ENCODE measurements at regions of chr17 and their contacts with region 1.

Region 1: GRCh38 chr17:42773290-42774035 is at the start of gene VPS25:
- DNase-seq: peak; percentile 57 to 79 (median 73)
- ATAC-seq: peak; percentile 96
- H3K4me3 ChIP-seq: peak within 1 kb of the TSS; percentile 97
- H3K4me3 Mint-ChIP-seq: peak within 1 kb of the TSS; percentile 94 to 100 (median 98)
- H3K27ac ChIP-seq: peak within 1 kb of the TSS; percentile 93
- H3K27ac Mint-ChIP-seq: peak within 1 kb of the TSS; percentile 96 to 99 (median 98)
- H3K4me1 ChIP-seq: peaks cover 8% of the 10 kb centered on the region in 2 donors
- H3K4me1 Mint-ChIP-seq: peaks cover 12 to 35% (median 29%) of the 10 kb centered on the region in 7 donors
- H3K27me3 ChIP-seq: no peaks in the 10 kb centered on the region
- H3K27me3 Mint-ChIP-seq: peaks cover 0 to 5% (median 0%) of the 10 kb centered on the region in 5 donors
- total RNA-seq, gene VPS25: 24.3 to 60.6 (median 37.7) TPM

Region 2: DNA sequence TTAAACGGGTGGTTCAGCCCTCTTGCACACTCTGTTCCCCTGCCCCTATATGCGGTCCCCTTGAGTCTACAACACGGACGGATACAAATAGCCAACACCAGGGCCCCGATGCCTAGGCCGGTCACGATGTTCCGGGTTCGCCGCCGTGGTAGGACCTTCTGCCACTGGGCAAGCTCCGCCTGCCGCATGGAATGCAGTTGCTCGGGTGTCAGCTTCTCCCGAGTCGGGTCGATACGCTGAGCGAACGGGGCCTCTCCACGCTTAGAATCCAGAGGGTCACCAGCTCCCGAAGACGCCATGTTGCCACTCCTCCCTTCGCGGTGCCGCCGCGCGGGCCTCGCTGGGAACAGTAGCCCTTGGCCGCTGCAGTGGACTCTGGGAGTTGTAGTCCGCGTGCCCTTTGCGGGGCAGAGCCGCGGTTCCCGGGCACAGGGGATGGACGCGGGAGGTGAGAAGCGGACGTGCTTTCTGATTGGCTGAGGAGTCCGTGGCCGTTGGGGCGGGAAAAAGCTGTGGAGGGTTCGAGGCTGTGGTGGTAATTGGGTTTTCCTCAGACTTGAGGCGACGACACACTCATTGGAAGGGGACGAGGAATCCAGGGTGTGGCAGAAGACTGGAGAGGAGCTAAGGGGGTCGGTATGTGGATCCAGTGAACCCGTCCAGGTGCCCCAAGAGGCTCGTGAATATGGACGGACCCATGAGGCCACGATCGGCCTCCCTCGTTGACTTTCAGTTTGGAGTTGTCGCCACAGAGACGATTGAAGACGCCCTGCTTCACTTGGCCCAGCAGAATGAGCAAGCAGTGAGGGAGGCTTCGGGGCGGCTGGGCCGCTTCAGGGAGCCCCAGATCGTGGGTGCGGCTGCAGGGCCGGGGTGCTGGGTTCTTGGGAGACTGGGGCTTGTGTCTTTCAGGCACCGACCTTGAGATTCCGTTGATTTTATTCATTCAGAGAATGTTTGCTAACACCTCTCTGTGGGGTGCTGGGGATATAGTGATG is 25.2 kb after region 1 on chr17 and contains the starts of genes CNTD1 and COA3:
- CTCF ChIA-PET with region 1: no interaction called
- POLR2A ChIA-PET with region 1: interaction called, 19 read pairs
- intact Hi-C with region 1: no loop called
- DNase-seq: peak; percentile 50 to 84 (median 58)
- ATAC-seq: peak; percentile 99
- H3K4me3 ChIP-seq: peak within 1 kb of the TSS; percentile 98
- H3K4me3 Mint-ChIP-seq: peak within 1 kb of the TSS; percentile 88 to 97 (median 94)
- H3K27ac ChIP-seq: peak within 1 kb of the TSS; percentile 76
- H3K27ac Mint-ChIP-seq: peak within 1 kb of the TSS; percentile 68 to 93 (median 82)
- H3K4me1 ChIP-seq: peaks cover 8 to 10% of the 10 kb centered on the region in 2 donors
- H3K4me1 Mint-ChIP-seq: peaks cover 22 to 34% (median 31%) of the 10 kb centered on the region in 7 donors
- H3K27me3 ChIP-seq: no peaks in the 10 kb centered on the region
- H3K27me3 Mint-ChIP-seq: peaks cover 0 to 19% (median 0%) of the 10 kb centered on the region in 5 donors
- total RNA-seq, gene CNTD1: not detected
- total RNA-seq, gene COA3: 7.6 to 48.1 (median 27.6) TPM

Region 3: GRCh38 chr17:42832974-42833766 is 59.7 kb after region 1 on chr17 and contains the start of gene PSME3:
- CTCF ChIA-PET with region 1: no interaction called
- POLR2A ChIA-PET with region 1: interaction called, 14 read pairs
- intact Hi-C with region 1: no loop called
- DNase-seq: peak; percentile 83 to 91 (median 89)
- ATAC-seq: peak; percentile 94
- H3K4me3 ChIP-seq: peak within 1 kb of the TSS; percentile 100
- H3K4me3 Mint-ChIP-seq: peak within 1 kb of the TSS; percentile 95 to 98 (median 97)
- H3K27ac ChIP-seq: peak within 1 kb of the TSS; percentile 98
- H3K27ac Mint-ChIP-seq: peak within 1 kb of the TSS; percentile 97 to 100 (median 99)
- H3K4me1 ChIP-seq: peaks cover 10 to 16% of the 10 kb centered on the region in 2 donors
- H3K4me1 Mint-ChIP-seq: peaks cover 11 to 40% (median 33%) of the 10 kb centered on the region in 7 donors
- H3K27me3 ChIP-seq: no peaks in the 10 kb centered on the region
- H3K27me3 Mint-ChIP-seq: peaks cover 0 to 7% (median 2%) of the 10 kb centered on the region in 5 donors
- total RNA-seq, gene PSME3: 53.8 to 116 (median 65.9) TPM

Region 4: GRCh38 chr17:42928714-42929496 is 155.4 kb after region 1 on chr17:
- CTCF ChIA-PET with region 1: no interaction called
- POLR2A ChIA-PET with region 1: no interaction called
- intact Hi-C with region 1: no loop called
- DNase-seq: peak in 2 of 9 donors; percentile 4 to 24
- ATAC-seq: peak; percentile 88
- H3K4me3 ChIP-seq: no peak overlapping the region
- H3K4me3 Mint-ChIP-seq: no peak overlapping the region
- H3K27ac ChIP-seq: no peak overlapping the region
- H3K27ac Mint-ChIP-seq: peak overlapping the region in 2 of 9 donors; percentile 2 to 36
- H3K4me1 ChIP-seq: no peaks in the 10 kb centered on the region
- H3K4me1 Mint-ChIP-seq: peaks cover 0 to 12% (median 4%) of the 10 kb centered on the region in 7 donors
- H3K27me3 ChIP-seq: no peaks in the 10 kb centered on the region
- H3K27me3 Mint-ChIP-seq: peaks cover 0 to 4% (median 0%) of the 10 kb centered on the region in 5 donors

Region 5: DNA sequence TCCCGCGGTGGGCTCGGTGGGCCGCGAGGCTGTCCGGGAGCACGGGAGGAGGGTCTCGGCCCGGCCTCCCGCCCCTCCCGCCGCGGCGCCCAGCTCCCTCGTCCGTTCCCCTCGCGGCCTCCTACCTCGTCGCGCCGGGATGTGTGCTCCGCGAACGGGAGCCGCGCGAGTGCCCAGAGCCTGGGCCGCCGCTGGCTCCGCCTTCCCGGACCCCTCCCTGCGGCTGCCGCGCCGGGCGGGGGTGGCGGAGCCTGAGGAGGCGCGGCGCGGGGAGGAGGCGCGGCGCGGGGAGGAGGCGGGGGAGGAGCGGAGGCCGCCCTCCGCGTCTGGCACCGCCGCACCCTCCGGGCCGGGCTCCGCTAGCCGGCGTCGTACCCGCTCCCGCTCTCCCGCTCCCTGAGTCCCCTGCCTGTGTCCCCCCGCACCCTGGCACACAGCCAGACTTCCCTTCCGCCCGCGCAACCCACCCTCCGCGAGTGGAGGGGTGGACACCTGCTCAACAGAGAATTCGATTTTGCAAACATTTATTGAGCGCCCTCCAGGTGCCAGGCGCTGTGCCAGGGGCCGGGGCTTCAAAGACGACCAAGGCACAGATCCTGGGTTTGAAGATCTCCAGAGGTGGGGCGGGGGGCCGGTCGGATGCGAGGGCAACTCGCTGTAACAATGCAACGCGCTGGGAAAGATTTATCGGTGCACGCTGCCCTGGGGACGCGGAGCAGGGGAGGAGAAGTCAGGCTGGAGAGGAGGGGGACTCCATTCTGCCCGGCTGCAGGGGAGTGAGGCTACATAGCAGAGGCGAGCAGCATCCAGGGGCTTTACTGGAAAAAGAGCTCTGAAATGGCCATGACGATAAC is 1059.7 kb after region 1 on chr17 and contains the start of gene MPP3:
- CTCF ChIA-PET with region 1: no interaction called
- POLR2A ChIA-PET with region 1: no interaction called
- intact Hi-C with region 1: no loop called
- DNase-seq: peak; percentile 14 to 53 (median 45)
- ATAC-seq: peak; percentile 94
- H3K4me3 ChIP-seq: peak within 1 kb of the TSS; percentile 52
- H3K4me3 Mint-ChIP-seq: peak within 1 kb of the TSS; percentile 78 to 91 (median 84)
- H3K27ac ChIP-seq: no peak within 1 kb of the TSS
- H3K27ac Mint-ChIP-seq: peak within 1 kb of the TSS in 2 of 9 donors; percentile 41 to 61
- H3K4me1 ChIP-seq: peaks cover 5 to 8% of the 10 kb centered on the region in 2 donors
- H3K4me1 Mint-ChIP-seq: peaks cover 9 to 30% (median 14%) of the 10 kb centered on the region in 7 donors
- H3K27me3 ChIP-seq: peaks cover 10 to 13% of the 10 kb centered on the region in 2 donors
- H3K27me3 Mint-ChIP-seq: peaks cover 15 to 66% (median 23%) of the 10 kb centered on the region in 5 donors
- total RNA-seq, gene MPP3: 0.32 to 1.4 TPM in 2 of 5 experiments, not detected in the others

Measured in naive thymus-derived CD4-positive, alpha-beta T cell (primary cell).